Sciatic nerve (tissue), 2 donors: ENCODE measurements at regions of chr6 and their contacts with region 1.

Region 1: GRCh38 chr6:166722785-166723184 is 95.7 kb upstream of the RPS6KA2 start:
- DNase-seq: no peak
- ATAC-seq: no peak

Region 2: DNA sequence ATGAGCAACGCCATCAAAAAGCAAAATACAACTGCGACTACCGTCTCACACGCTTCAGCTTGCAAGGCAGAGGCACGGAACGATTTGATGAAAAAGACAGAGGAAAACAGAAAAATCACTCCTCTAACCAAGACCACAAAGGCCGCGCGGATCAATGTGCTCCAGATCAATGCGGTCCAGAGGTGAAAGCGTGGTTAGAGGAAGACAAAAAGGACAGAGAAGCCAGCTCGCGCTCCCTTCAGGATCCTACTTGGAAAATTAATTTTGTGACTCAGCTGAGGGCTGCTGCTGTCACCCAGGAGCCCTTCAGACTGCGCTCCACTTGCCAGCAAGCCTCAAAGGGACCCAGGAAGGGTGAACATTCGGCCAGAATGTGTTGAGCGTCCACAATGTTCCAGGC is 44.4 kb after region 1 on chr6:
- intact Hi-C with region 1: loop called (anchors 1 kb)
- DNase-seq: peak; percentile 25
- ATAC-seq: no peak

Region 3: GRCh38 chr6:167760979-167761793 is 1038.4 kb after region 1 on chr6:
- intact Hi-C with region 1: no loop called
- DNase-seq: peak; percentile 88
- ATAC-seq: peak; percentile 90